Activated CD4-positive, alpha-beta memory T cell treated with anti-CD3 and anti-CD28 coated beads, Interleukin-2, amount 10 ng/mL, durations not matched to agents 7 days and 5 days (primary cell): ENCODE measurements at regions of chr12 and their contacts with region 1.

Region 1: GRCh38 chr12:54658306-54659264 is 10.4 kb upstream of the DCD start:
- DNase-seq: peak; percentile 51
- H3K4me3 Mint-ChIP-seq: no peak overlapping the region
- H3K27ac Mint-ChIP-seq: no peak overlapping the region
- H3K4me1 Mint-ChIP-seq: no peaks in the 10 kb centered on the region
- H3K27me3 Mint-ChIP-seq: peaks cover 14% of the 10 kb centered on the region

Region 2: DNA sequence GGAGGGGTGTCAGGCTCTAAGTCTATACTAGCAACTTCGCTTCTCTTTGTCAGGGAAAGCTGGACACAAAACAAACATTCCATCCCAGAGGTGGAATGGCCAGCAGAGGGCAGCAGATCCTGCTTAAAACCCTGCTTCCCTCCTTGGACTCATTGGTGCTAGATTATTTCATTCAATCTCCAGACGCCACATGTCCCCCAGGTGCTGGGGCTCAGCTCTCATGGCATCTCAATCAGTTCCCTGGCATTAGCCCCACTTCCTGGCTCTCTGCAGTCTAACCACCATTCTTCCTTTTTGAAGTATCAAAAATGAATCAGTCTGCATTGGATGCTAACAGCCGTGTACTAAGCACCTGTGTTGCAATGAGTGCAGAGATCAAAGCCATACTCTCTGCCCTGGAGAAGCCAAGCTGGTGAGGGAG is 62.0 kb before region 1 on chr12:
- CTCF ChIA-PET with region 1: interaction called, 13 read pairs
- POLR2A ChIA-PET with region 1: no interaction called
- DNase-seq: peak; percentile 55
- H3K4me3 Mint-ChIP-seq: no peak overlapping the region
- H3K27ac Mint-ChIP-seq: no peak overlapping the region
- H3K4me1 Mint-ChIP-seq: no peaks in the 10 kb centered on the region
- H3K27me3 Mint-ChIP-seq: peaks cover 20% of the 10 kb centered on the region